Transverse colon (tissue), 4 donors: ENCODE measurements at regions of chr15 and their contacts with region 1.

Region 1: DNA sequence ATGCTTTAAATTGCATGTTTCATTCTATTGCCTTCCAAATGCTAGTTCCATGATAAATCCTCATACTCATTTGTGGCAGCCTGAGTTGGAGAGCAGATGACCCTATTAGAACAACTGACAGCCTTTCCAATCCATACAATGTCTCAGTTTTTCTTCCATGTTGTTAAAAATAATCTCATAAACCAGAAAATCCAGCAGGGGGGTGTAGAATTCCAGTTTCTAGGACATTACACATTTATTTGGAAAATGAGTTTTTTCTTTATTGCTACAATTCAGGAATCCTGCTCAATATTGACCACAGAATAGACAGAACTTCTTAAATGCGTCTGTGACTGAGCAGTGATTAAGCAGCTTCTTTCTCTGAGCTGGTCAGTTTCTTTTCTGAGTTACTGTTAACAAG is 174.2 kb upstream of the ATP10A start:
- DNase-seq: no peak
- H3K4me3 ChIP-seq: no peak overlapping the region
- H3K27ac ChIP-seq: no peak overlapping the region
- H3K4me1 ChIP-seq: no peaks in the 10 kb centered on the region
- H3K27me3 ChIP-seq: no peaks in the 10 kb centered on the region
- CTCF ChIP-seq: no peak
- EP300 ChIP-seq: no peak
- POLR2A ChIP-seq: no peak

Region 2: GRCh38 chr15:26260517-26261133 is 223.3 kb after region 1 on chr15:
- in situ Hi-C with region 1: loop called in 1 of 4 experiments (anchors 25 kb)
- intact Hi-C with region 1: no loop called
- DNase-seq: no peak
- H3K4me3 ChIP-seq: no peak overlapping the region
- H3K27ac ChIP-seq: no peak overlapping the region
- H3K4me1 ChIP-seq: no peaks in the 10 kb centered on the region
- H3K27me3 ChIP-seq: no peaks in the 10 kb centered on the region
- CTCF ChIP-seq: peak; percentile 24 to 61 (median 53)
- EP300 ChIP-seq: no peak
- POLR2A ChIP-seq: no peak